ENCODE measurements at regions of chr12 and their contacts with region 1.

Region 1: GRCh38 chr12:56468216-56469006 is at the start of gene SPRYD4:
- DNase-seq: peak; percentile 94
- H3K4me3 ChIP-seq: peak within 1 kb of the TSS; percentile 81 to 86
- H3K27ac ChIP-seq: peak within 1 kb of the TSS; percentile 87 to 88
- H3K4me1 ChIP-seq: peaks cover 6 to 9% of the 10 kb centered on the region in 2 experiments; a peak in 1 of 4 replicates
- H3K27me3 ChIP-seq: no peaks in the 10 kb centered on the region
- CTCF ChIP-seq: peak; percentile 45
- EP300 ChIP-seq: no peak; a peak in 1 of 4 replicates
- RAD21 ChIP-seq: no peak
- polyA plus RNA-seq, gene SPRYD4: 2.6 and 3.5 TPM in 2 replicates

Region 2: DNA sequence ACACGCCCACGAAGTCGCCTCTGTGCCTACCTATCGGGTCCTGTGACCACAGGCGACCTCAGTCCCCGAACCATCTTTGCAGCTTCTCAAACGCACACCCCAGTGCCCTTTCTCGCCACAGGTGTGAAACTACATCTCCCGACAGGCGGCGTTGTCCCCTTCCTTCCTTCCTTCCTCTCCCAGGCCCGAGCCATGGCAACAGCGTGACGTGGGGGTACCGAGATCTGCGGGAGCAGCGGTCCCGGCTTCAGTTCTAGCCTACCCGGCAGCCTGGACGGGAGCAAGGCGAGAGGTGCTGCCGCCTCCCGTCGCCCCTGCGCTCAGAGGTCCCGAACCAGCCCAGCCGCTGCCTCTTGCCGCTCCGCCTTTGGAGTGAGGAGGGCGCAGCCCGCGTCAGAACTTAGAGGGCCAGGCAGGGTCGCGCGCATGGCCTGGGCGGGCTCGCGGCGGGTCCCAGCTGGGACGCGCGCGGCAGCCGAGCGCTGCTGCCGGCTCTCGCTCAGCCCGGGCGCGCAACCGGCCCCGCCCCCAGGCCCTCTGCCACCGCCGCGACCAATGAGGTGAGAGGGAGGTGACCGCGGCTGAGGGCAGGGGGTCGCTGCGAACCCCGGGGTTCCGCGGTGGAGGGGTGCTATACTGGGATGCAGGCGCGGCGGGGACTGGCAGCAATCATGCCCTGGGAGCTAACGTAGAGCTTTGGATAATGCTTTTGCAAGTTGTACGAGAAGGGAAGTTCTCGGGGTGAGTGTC is 201.5 kb before region 1 on chr12 and contains the start of gene COQ10A:
- CTCF ChIA-PET with region 1: interaction called, 11 read pairs
- POLR2A ChIA-PET with region 1: interaction called, 3 read pairs
- DNase-seq: peak; percentile 98
- H3K4me3 ChIP-seq: peak within 1 kb of the TSS; percentile 69 to 74
- H3K27ac ChIP-seq: peak within 1 kb of the TSS; percentile 88 to 92
- H3K4me1 ChIP-seq: peaks cover 4 to 8% of the 10 kb centered on the region in 2 experiments; a peak in 1 of 4 replicates
- H3K27me3 ChIP-seq: no peaks in the 10 kb centered on the region
- CTCF ChIP-seq: peak; percentile 62
- EP300 ChIP-seq: no peak
- RAD21 ChIP-seq: no peak
- polyA plus RNA-seq, gene COQ10A: 42.2 and 56.2 TPM in 2 replicates

Region 3: DNA sequence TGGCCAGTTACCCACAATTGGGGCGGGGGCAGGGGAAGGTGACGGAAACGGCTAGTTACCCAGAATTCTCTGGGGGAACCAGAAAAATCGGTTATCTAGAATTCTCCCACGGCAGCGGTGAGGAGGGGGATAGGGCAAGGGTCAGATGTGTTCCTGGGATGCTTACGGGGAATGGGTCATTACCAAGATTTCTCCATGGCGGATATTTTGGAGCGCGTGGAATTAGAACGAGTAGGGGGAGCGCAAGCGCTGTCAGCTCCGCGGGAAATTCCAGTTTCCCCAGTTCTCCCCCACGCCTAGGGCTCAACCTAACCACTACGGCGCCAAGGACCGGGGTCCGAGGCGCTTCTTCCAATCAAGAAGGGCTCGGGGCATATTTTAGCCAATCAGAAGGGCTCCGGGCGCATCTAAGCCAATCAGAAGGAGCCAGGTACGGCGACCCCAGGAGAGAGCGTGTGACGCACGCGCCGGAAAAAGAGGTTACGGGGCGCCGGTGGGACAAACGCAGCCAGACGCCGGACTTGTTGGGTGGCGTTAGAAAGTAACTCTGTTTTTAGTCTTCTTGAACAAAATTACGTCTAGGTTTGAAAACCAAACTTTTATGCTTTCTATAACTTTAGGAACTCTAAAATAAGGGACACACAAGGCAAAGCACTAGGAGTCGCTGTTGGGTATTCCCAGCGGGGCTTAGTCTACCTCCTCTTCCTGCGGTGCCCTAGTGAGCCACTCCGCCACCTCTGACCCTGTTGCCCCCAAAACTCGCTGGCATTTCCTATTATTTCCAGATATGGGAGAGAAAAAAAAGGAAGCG is 134.5 kb before region 1 on chr12 and contains the start of gene PAN2:
- CTCF ChIA-PET with region 1: interaction called, 17 read pairs
- POLR2A ChIA-PET with region 1: interaction called, 3 read pairs
- DNase-seq: peak; percentile 93
- H3K4me3 ChIP-seq: peak within 1 kb of the TSS; percentile 61 to 73
- H3K27ac ChIP-seq: peak within 1 kb of the TSS; percentile 84 to 97
- H3K4me1 ChIP-seq: peaks cover 4 to 8% of the 10 kb centered on the region in 2 experiments; a peak in 1 of 4 replicates
- H3K27me3 ChIP-seq: no peaks in the 10 kb centered on the region
- CTCF ChIP-seq: peak; percentile 80
- EP300 ChIP-seq: no peak
- RAD21 ChIP-seq: no peak
- polyA plus RNA-seq, gene PAN2: 37.1 and 66.9 TPM in 2 replicates

Region 4: DNA sequence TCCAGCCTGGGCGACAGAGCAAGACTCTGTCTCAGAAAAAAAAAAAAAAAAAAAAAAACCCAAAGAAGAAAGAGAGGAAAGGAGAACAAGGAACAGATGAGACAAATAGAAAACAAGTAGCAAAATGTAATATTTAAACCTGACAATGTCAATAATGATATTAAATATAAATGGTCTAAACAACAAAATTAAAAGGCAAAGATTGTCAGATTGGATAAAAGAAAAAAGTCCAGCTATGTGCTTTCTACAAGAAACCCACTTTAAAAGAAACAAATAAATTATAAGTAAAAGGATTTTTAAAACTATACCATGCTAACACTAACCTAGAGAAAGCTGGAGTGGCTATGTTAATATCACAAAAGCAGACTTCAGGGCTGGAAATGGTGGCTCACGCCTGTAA is 76.1 kb before region 1 on chr12:
- CTCF ChIA-PET with region 1: no interaction called
- POLR2A ChIA-PET with region 1: no interaction called
- DNase-seq: no peak
- H3K4me3 ChIP-seq: no peak overlapping the region
- H3K27ac ChIP-seq: no peak overlapping the region
- H3K4me1 ChIP-seq: no peaks in the 10 kb centered on the region
- H3K27me3 ChIP-seq: no peaks in the 10 kb centered on the region
- CTCF ChIP-seq: no peak
- EP300 ChIP-seq: no peak
- RAD21 ChIP-seq: no peak

Region 5: GRCh38 chr12:56448860-56449621 is 19.4 kb before region 1 on chr12 and contains the start of gene TIMELESS:
- CTCF ChIA-PET with region 1: interaction called, 32 read pairs
- POLR2A ChIA-PET with region 1: interaction called, 3 read pairs
- DNase-seq: peak; percentile 95
- H3K4me3 ChIP-seq: peak within 1 kb of the TSS; percentile 68 to 75
- H3K27ac ChIP-seq: peak within 1 kb of the TSS; percentile 72 to 91
- H3K4me1 ChIP-seq: peaks cover 3 to 8% of the 10 kb centered on the region in 2 experiments; a peak in 3 of 4 replicates
- H3K27me3 ChIP-seq: no peaks in the 10 kb centered on the region
- CTCF ChIP-seq: no peak
- EP300 ChIP-seq: no peak
- RAD21 ChIP-seq: no peak
- polyA plus RNA-seq, gene TIMELESS: 5.1 and 5.4 TPM in 2 replicates

Region 6: DNA sequence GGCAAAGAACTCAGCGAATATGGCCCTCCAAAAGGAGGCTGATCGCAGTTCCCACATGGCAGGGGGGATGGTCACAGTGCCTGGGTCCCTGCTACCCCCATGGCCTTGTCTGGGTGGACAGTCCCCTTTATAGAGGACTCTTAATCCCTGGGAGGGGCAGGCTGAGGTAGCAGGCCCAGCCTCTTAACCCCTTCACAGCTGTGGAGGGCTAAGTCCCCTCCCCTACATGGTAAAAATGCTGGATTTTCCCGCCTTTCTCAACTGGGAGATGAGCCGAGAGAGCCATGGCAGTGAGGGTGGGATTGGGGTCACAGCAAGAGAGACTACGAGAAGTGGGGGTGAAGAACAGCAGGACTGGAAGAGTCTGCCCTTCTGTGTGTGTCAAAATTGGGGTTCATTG is 13.9 kb before region 1 on chr12 and contains the start of gene MIP:
- CTCF ChIA-PET with region 1: interaction called, 32 read pairs
- POLR2A ChIA-PET with region 1: interaction called, 3 read pairs
- DNase-seq: no peak
- H3K4me3 ChIP-seq: no peak within 1 kb of the TSS
- H3K27ac ChIP-seq: no peak within 1 kb of the TSS
- H3K4me1 ChIP-seq: peaks cover 3 to 8% of the 10 kb centered on the region in 2 experiments; a peak in 3 of 4 replicates
- H3K27me3 ChIP-seq: no peaks in the 10 kb centered on the region
- CTCF ChIP-seq: no peak
- EP300 ChIP-seq: no peak
- RAD21 ChIP-seq: no peak
- polyA plus RNA-seq, gene MIP: not detected in 2 replicates

Region 7: DNA sequence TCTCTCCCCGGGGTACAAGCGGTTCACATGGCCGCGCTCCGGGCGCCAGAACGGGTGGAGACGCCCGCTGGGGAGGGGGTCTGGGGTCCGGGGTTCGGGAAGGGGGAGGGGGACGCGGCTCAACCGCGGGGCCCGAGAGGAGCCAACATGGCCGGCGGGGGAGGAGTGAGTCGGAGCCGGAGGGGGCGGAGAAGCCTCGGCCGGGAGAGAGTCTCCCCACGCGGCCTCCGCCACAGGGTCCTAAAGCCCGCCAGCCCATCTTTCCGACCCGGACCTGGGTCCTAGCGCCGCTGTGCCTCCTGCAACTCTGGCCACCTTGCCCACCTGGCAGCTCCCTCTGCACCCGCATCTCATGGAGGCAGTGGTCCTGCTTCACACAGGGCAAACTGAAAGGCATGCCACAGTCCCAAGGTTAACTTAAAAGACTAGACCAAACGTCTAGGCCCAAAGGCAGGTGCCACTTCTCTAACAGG is 161.8 kb after region 1 on chr12 and contains the start of gene BAZ2A:
- CTCF ChIA-PET with region 1: no interaction called
- POLR2A ChIA-PET with region 1: no interaction called
- DNase-seq: peak; percentile 97
- H3K4me3 ChIP-seq: peak within 1 kb of the TSS; percentile 71 to 94
- H3K27ac ChIP-seq: peak within 1 kb of the TSS; percentile 80 to 89
- H3K4me1 ChIP-seq: peaks cover 19 to 39% of the 10 kb centered on the region in 2 experiments
- H3K27me3 ChIP-seq: no peaks in the 10 kb centered on the region
- CTCF ChIP-seq: no peak
- EP300 ChIP-seq: no peak; a peak in 1 of 4 replicates
- RAD21 ChIP-seq: no peak
- polyA plus RNA-seq, gene BAZ2A: 32.4 and 34.9 TPM in 2 replicates